Sciatic nerve (tissue), 2 donors: ENCODE measurements at regions of chr12 and their contacts with region 1.

Region 1: GRCh38 chr12:97435153-97435552 is 27.5 kb upstream of the RMST start:
- DNase-seq: no peak
- ATAC-seq: no peak

Region 2: DNA sequence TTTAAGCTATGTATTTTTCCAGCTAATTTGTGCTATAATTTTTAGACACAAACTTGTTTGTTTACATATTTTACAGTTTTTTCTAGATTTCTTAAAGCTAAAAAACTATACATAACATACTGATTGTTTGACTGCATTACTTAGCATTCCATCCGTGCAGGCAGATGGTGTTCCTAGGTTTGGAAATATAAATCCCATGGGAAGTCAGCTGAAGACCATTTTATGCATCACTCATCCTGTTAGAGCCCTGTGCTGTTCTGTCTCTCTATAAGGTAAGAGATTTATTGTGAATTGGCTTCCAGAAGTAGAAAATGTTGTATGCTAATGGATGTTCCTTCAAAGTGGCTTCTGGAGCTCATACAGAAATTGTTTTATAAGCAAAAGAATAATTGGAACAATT is 58.6 kb after region 1 on chr12:
- intact Hi-C with region 1: no loop called
- DNase-seq: no peak
- ATAC-seq: no peak

Region 3: GRCh38 chr12:98516184-98516873 is 1081.2 kb after region 1 on chr12:
- intact Hi-C with region 1: no loop called
- DNase-seq: peak; percentile 81
- ATAC-seq: peak; percentile 37

Region 4: DNA sequence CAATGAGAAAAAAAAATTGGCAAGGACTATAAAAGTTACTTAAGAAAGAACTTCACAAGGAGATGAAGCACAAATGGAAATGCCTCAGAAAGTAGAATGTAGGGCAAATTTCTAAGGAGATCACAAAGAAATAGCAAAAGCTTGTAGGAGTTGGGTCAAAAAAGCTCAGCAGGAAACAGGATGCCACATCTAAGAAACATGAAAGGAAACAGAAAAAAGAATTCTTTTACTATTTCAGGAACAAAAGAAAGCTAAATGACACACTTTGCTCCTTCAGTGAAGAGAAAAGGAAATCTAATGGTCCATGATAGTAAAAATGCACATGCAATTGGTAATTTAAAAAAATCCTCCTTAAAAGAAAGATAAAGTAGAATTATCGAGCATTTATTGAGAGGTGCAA is 1760.3 kb after region 1 on chr12:
- intact Hi-C with region 1: loop called (anchors 5 kb)
- DNase-seq: no peak
- ATAC-seq: no peak